Gastrocnemius medialis (tissue), 4 donors: ENCODE measurements at regions of chr22 and their contacts with region 1.

Region 1: GRCh38 chr22:45268958-45269844 is 15.5 kb upstream of the UPK3A start:
- DNase-seq: peak; percentile 65 to 68
- ATAC-seq: peak; percentile 49 to 55
- H3K4me3 ChIP-seq: peak overlapping the region; percentile 61 to 75 (median 64)
- H3K27ac ChIP-seq: peak overlapping the region; percentile 88 to 100 (median 93)
- H3K4me1 ChIP-seq: peaks cover 43 to 45% of the 10 kb centered on the region in 2 donors
- H3K27me3 ChIP-seq: no peaks in the 10 kb centered on the region
- CTCF ChIP-seq: peak; percentile 80 to 99 (median 97)
- POLR2A ChIP-seq: peak in 1 of 2 donors; percentile 14

Region 2: GRCh38 chr22:45336971-45337431 is 67.8 kb after region 1 on chr22:
- in situ Hi-C with region 1: no loop called
- intact Hi-C with region 1: loop called (anchors 2 kb)
- DNase-seq: peak; percentile 60 to 85
- ATAC-seq: peak; percentile 12 to 20
- H3K4me3 ChIP-seq: peak overlapping the region in 1 of 4 donors; percentile 23
- H3K27ac ChIP-seq: peak overlapping the region; percentile 88 to 91 (median 90)
- H3K4me1 ChIP-seq: peaks cover 53 to 62% of the 10 kb centered on the region in 2 donors
- H3K27me3 ChIP-seq: no peaks in the 10 kb centered on the region
- CTCF ChIP-seq: no peak
- POLR2A ChIP-seq: no peak

Region 3: GRCh38 chr22:45435544-45436139 is 166.4 kb after region 1 on chr22:
- in situ Hi-C with region 1: loop called (anchors 5 kb)
- intact Hi-C with region 1: loop called (anchors 1 kb)
- DNase-seq: peak; percentile 72 to 81
- ATAC-seq: peak; percentile 95 to 98
- H3K4me3 ChIP-seq: peak overlapping the region; percentile 27 to 45 (median 34)
- H3K27ac ChIP-seq: peak overlapping the region; percentile 53 to 65 (median 62)
- H3K4me1 ChIP-seq: peaks cover 0 to 7% of the 10 kb centered on the region in 2 donors
- H3K27me3 ChIP-seq: no peaks in the 10 kb centered on the region
- CTCF ChIP-seq: peak; percentile 93 to 98 (median 96)
- POLR2A ChIP-seq: no peak

Region 4: DNA sequence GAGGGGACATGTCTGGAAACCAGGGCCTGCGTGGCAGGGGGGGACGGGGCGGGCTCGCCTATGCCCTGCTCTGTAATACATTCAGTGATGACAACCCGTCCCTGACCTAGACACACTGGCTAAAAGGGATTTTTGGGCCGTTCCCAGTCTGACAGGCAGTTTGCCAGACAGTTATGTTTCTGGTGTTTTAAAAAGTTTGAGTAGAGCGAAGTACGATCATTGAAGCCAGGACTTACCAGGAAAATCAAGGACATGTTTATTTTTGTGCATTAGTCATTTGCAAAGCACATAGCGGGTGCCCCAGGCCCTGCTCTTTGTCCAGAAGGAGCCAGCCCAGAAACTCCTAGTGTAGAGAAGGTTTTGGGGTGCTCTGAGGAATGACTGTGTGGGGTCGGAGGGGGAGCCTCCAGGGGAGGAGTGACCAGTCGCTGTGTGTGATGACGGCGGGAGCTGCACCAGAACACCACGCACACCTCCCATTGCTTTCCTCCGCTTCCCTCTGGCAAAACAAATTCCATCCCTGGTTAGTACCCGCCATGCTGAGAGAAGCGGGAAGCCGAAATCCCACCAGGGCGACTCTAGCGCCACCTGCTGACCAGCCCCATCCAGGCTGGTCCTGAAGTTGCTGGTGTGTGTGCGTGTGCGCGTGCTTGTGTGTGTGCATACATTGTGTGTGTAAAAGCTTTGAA is 284.3 kb after region 1 on chr22:
- in situ Hi-C with region 1: loop called (anchors 5 to 10 kb)
- intact Hi-C with region 1: loop called (anchors 1 kb)
- DNase-seq: peak; percentile 41 to 54
- ATAC-seq: peak; percentile 74 to 78
- H3K4me3 ChIP-seq: no peak overlapping the region
- H3K27ac ChIP-seq: peak overlapping the region; percentile 56 to 68 (median 60)
- H3K4me1 ChIP-seq: peaks cover 0 to 19% of the 10 kb centered on the region in 2 donors
- H3K27me3 ChIP-seq: no peaks in the 10 kb centered on the region
- CTCF ChIP-seq: peak; percentile 75 to 95 (median 88)
- POLR2A ChIP-seq: no peak